CD14-positive monocyte (primary cell): ENCODE measurements at regions of chr12 and their contacts with region 1.

Region 1: DNA sequence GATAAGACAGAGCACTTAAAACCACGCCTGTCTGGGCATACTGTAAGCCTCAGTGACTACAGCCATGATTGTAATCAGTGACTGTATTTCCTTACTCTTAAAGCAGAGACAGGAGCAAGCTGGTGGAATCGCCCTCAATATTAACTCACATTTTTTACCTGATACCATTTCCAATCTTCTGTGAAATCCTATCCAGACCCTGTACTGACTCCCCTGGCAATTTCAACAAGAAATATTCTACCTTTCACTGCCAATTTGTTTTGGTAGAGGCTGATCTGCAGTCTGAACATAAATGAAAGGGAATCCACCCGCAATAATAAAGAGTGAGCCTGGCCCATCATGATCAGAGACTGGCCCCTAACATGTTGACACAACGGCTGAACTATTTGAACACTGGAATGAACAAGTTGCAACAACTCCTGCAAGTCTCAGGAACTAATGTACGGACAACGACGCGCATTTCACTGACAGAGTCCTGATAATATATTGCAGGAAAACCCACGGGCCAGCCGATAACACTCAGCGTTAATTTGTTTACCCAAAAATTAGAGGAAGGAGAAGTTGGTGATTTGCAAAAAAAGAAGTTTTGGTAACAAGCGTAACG is 195.5 kb upstream of the BTG1 start:
- DNase-seq: peak in 1 of 3 donors; percentile 17
- H3K4me3 ChIP-seq: peak overlapping the region in 2 of 3 experiments; percentile 32 to 46
- H3K4me3 Mint-ChIP-seq: peak overlapping the region; percentile 50 to 77
- H3K27ac ChIP-seq: peak overlapping the region in 1 of 2 donors; percentile 13
- H3K27ac Mint-ChIP-seq: peak overlapping the region in 5 of 7 donors; percentile 20 to 84 (median 47)
- H3K4me1 ChIP-seq: peaks cover 5 to 24% of the 10 kb centered on the region in 2 donors
- H3K4me1 Mint-ChIP-seq: peaks cover 26% of the 10 kb centered on the region
- H3K27me3 ChIP-seq: no peaks in the 10 kb centered on the region
- H3K27me3 Mint-ChIP-seq: no peaks in the 10 kb centered on the region
- CTCF ChIP-seq: no peak

Region 2: DNA sequence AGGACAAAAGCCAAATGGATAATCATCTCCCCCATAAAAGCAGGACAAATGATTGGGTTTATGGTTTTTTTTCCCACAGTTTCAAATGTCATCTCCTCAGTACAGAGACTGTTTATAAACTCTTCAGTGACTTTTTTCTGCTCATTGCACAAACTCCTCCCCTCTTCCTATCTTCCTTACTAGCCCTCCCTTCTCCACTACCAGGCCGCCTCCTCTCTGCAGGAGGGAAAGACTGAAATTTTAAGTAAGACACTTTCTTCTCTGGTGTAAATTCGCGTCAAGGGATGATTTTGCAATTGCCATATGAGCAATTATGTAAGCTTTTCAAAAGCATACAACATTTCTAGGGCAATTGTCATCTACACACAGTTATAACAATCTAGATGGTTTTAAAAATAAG is 232.5 kb before region 1 on chr12:
- intact Hi-C with region 1: no loop called
- DNase-seq: peak; percentile 52 to 55 (median 54)
- H3K4me3 ChIP-seq: peak overlapping the region in 1 of 3 experiments; percentile 30
- H3K4me3 Mint-ChIP-seq: peak overlapping the region; percentile 6 to 77
- H3K27ac ChIP-seq: peak overlapping the region in 1 of 2 donors; percentile 76
- H3K27ac Mint-ChIP-seq: peak overlapping the region; percentile 36 to 91 (median 86)
- H3K4me1 ChIP-seq: peaks cover 57 to 64% of the 10 kb centered on the region in 2 donors
- H3K4me1 Mint-ChIP-seq: peaks cover 66% of the 10 kb centered on the region
- H3K27me3 ChIP-seq: no peaks in the 10 kb centered on the region
- H3K27me3 Mint-ChIP-seq: no peaks in the 10 kb centered on the region
- CTCF ChIP-seq: no peak

Region 3: GRCh38 chr12:92551853-92552397 is 210.8 kb after region 1 on chr12:
- intact Hi-C with region 1: loop called in 1 of 2 experiments (anchors 10 kb)
- DNase-seq: peak in 2 of 3 donors; percentile 13 to 79
- H3K4me3 ChIP-seq: no peak overlapping the region
- H3K4me3 Mint-ChIP-seq: no peak overlapping the region
- H3K27ac ChIP-seq: no peak overlapping the region
- H3K27ac Mint-ChIP-seq: no peak overlapping the region
- H3K4me1 ChIP-seq: no peaks in the 10 kb centered on the region
- H3K4me1 Mint-ChIP-seq: no peaks in the 10 kb centered on the region
- H3K27me3 ChIP-seq: no peaks in the 10 kb centered on the region
- H3K27me3 Mint-ChIP-seq: peaks cover 0 to 3% (median 2%) of the 10 kb centered on the region in 3 donors
- CTCF ChIP-seq: no peak